Testis (tissue), 5 donors: ENCODE measurements at regions of chr6 and their contacts with region 1.

Region 1: DNA sequence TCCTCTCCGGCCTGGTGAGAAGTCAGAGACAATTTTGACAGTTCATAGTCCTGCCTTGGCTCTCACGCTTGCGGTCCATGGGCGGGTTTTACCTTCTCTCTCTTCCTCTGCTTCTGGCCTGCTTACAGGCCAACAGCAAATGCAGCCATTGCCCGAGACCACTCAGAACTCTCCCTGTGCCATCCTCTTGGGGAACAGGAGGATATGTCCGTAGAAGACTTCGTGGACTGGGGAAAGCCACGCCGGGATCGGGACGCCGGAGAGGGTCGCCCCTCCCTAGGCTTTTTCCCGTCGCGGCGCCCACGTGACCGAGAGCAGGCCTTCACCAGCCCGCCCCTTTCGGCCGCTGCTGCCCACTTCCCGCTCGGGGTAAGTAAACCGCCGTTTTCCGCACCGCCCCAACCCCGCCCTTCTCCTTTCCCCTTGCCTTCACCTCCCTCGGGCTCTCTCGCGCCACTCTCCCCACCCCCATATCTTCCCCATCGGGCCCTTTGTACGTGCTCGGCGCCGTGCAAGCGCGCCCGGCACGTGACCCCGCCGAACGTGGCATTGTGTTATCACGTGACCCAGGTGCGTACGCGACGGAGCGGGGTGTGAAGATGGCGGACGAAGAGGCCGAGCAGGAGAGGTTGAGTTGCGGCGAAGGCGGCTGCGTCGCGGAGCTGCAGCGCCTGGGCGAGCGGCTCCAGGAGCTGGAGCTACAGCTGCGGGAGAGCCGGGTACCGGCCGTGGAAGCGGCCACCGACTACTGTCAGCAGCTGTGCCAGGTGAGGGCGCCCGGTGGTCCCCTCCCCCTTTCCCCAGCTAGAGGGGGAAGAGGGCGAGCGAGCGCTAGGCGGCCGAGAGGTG is at the start of gene ZNF292:
- DNase-seq: peak; percentile 98
- H3K4me3 ChIP-seq: peak within 1 kb of the TSS; percentile 92 to 99
- H3K27ac ChIP-seq: peak within 1 kb of the TSS; percentile 96 to 97
- H3K4me1 ChIP-seq: peaks cover 26% of the 10 kb centered on the region
- H3K27me3 ChIP-seq: no peaks in the 10 kb centered on the region
- CTCF ChIP-seq: no peak
- POLR2A ChIP-seq: peak; percentile 40
- total RNA-seq, gene ZNF292: 53.2 to 58.8 TPM

Region 2: GRCh38 chr6:89079611-89080541 is 1924.7 kb after region 1 on chr6:
- intact Hi-C with region 1: loop called (anchors 10 kb)
- DNase-seq: peak; percentile 64
- H3K4me3 ChIP-seq: peak overlapping the region; percentile 98 to 100
- H3K27ac ChIP-seq: peak overlapping the region; percentile 100
- H3K4me1 ChIP-seq: peaks cover 8% of the 10 kb centered on the region
- H3K27me3 ChIP-seq: no peaks in the 10 kb centered on the region
- CTCF ChIP-seq: no peak
- POLR2A ChIP-seq: no peak